ENCODE measurements at regions of chr19 and their contacts with region 1.

Region 1: DNA sequence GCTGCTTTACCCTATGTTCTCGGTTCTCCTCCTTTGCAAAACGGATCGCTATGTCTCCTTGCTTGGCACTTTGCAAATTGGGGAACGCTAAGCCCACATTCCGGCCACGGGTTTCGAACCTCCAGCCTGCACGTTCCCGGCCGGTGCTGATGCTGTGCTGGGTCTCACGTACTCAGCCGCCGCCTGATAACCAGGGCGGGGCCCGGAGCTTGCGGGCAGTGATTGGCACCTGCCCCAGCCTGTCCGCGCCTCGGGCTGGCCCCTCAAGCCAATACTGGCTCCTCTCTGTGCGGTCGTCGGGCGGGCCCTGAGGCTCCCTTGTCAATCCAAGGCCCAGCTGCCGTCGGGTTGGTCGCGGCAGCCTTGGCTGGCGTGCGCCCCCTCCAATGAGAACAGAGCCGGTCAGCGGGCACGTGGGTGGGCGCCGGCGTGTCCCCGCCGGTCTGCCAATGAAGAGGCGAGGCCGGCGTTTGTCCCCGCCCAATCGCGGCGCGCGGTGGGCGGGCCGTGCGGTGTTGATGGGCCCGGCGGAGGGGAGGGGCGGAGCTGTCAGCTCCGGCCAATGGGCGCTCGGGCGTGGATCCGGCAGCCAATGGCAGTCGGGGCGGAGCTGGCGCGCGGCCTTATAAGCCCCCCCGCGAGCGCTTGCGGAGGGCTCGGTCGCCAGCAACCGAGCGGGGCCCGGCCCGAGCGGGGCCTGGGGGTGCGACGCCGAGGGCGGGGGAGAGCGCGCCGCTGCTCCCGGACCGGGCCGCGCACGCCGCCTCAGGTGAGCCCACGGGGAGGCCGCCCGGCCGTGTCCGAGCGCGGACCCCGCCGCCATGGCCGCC is at the start of gene KDM4B:
- DNase-seq: peak; percentile 99
- H3K4me3 ChIP-seq: peak within 1 kb of the TSS; percentile 71
- H3K4me3 Mint-ChIP-seq: peak within 1 kb of the TSS; percentile 85
- H3K27ac Mint-ChIP-seq: peak within 1 kb of the TSS; percentile 88
- H3K4me1 ChIP-seq: peaks cover 15% of the 10 kb centered on the region
- H3K4me1 Mint-ChIP-seq: peaks cover 27% of the 10 kb centered on the region
- H3K27me3 ChIP-seq: no peaks in the 10 kb centered on the region
- H3K27me3 Mint-ChIP-seq: no peaks in the 10 kb centered on the region
- CTCF ChIP-seq: no peak
- total RNA-seq, gene KDM4B: 27.4 and 30.9 TPM in 2 replicates

Region 2: GRCh38 chr19:4987256-4987655 is 18.6 kb after region 1 on chr19:
- CTCF ChIA-PET with region 1: interaction called, 3 read pairs
- POLR2A ChIA-PET with region 1: interaction called, 3 read pairs
- intact Hi-C with region 1: loop called (anchors 2 kb)
- DNase-seq: peak; percentile 67
- H3K4me3 ChIP-seq: no peak overlapping the region
- H3K4me3 Mint-ChIP-seq: peak overlapping the region; percentile 17
- H3K27ac Mint-ChIP-seq: peak overlapping the region; percentile 71
- H3K4me1 ChIP-seq: peaks cover 32% of the 10 kb centered on the region
- H3K4me1 Mint-ChIP-seq: peaks cover 34% of the 10 kb centered on the region
- H3K27me3 ChIP-seq: no peaks in the 10 kb centered on the region
- H3K27me3 Mint-ChIP-seq: no peaks in the 10 kb centered on the region
- CTCF ChIP-seq: no peak

Region 3: DNA sequence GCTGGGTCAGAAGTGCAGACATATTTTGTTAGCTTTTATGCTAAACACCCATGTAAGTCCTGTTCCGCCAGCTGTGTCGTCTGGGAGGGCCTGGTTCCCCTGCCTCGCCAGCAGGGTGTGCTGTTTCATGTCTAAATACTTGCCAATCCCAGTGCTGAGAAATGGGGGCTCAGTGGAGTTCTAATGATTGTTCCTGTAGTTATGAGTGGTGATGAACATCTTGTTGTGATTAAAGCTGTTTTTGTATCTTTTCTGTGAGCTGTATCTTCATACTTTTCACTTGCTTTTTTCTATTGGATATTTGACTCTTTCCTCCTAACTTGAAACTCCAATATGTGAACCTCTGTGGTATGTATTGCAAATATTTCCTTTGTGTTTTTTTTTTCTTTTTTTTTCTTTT is 32.9 kb after region 1 on chr19:
- CTCF ChIA-PET with region 1: interaction called, 13 read pairs
- POLR2A ChIA-PET with region 1: no interaction called
- intact Hi-C with region 1: no loop called
- DNase-seq: peak in 1 of 2 experiments; percentile 59
- H3K4me3 ChIP-seq: no peak overlapping the region
- H3K4me3 Mint-ChIP-seq: no peak overlapping the region
- H3K27ac Mint-ChIP-seq: peak overlapping the region; percentile 28
- H3K4me1 ChIP-seq: peaks cover 17% of the 10 kb centered on the region; the same call in 1 of the 2 replicates
- H3K4me1 Mint-ChIP-seq: peaks cover 8% of the 10 kb centered on the region
- H3K27me3 ChIP-seq: no peaks in the 10 kb centered on the region
- H3K27me3 Mint-ChIP-seq: no peaks in the 10 kb centered on the region
- CTCF ChIP-seq: peak; percentile 66 to 76

Region 4: DNA sequence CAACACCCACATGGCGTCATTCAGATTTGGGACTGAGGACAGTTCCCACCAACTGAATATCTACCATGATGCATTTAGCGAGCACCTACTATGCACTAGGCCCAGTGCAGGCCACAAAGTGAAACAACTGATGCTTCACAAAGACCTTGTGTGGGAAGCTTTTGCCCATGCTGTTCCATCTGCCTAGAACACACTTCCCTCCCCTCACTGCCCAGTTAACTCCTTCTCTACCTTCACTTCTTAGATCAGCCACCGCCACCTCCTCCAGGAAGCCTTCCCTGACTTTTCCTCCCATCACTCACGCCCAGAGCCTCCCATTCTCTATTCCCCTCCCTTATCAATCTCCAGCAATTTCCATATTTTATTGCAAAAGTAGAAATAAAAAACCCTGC is 346.2 kb after region 1 on chr19:
- CTCF ChIA-PET with region 1: no interaction called
- POLR2A ChIA-PET with region 1: interaction called, 19 read pairs
- intact Hi-C with region 1: no loop called
- DNase-seq: no peak
- H3K4me3 ChIP-seq: no peak overlapping the region
- H3K4me3 Mint-ChIP-seq: no peak overlapping the region
- H3K27ac Mint-ChIP-seq: no peak overlapping the region
- H3K4me1 ChIP-seq: no peaks in the 10 kb centered on the region
- H3K4me1 Mint-ChIP-seq: no peaks in the 10 kb centered on the region
- H3K27me3 ChIP-seq: no peaks in the 10 kb centered on the region
- H3K27me3 Mint-ChIP-seq: no peaks in the 10 kb centered on the region
- CTCF ChIP-seq: no peak

Measured in Caco-2 (cell line).